Natural killer cell (primary cell): ENCODE measurements at regions of chrX and their contacts with region 1.

Region 1: GRCh38 chrX:57918750-57919436 is 8.6 kb upstream of the ZXDA start:
- DNase-seq: peak in 1 of 2 donors; percentile 61
- ATAC-seq: peak in 1 of 3 donors; percentile 37
- H3K4me3 ChIP-seq: no peak overlapping the region
- H3K4me3 Mint-ChIP-seq: no peak overlapping the region
- H3K27ac ChIP-seq: no peak overlapping the region
- H3K27ac Mint-ChIP-seq: no peak overlapping the region
- H3K4me1 ChIP-seq: no peaks in the 10 kb centered on the region
- H3K4me1 Mint-ChIP-seq: no peaks in the 10 kb centered on the region
- H3K27me3 ChIP-seq: no peaks in the 10 kb centered on the region
- H3K27me3 Mint-ChIP-seq: peaks cover 3 to 19% of the 10 kb centered on the region in 2 donors
- CTCF ChIP-seq: peak; percentile 19

Region 2: GRCh38 chrX:56947695-56948094 is 971.2 kb before region 1 on chrX:
- intact Hi-C with region 1: no loop called
- DNase-seq: no peak
- ATAC-seq: no peak
- H3K4me3 ChIP-seq: no peak overlapping the region
- H3K4me3 Mint-ChIP-seq: no peak overlapping the region
- H3K27ac ChIP-seq: no peak overlapping the region
- H3K27ac Mint-ChIP-seq: no peak overlapping the region
- H3K4me1 ChIP-seq: no peaks in the 10 kb centered on the region
- H3K4me1 Mint-ChIP-seq: no peaks in the 10 kb centered on the region
- H3K27me3 ChIP-seq: no peaks in the 10 kb centered on the region
- H3K27me3 Mint-ChIP-seq: peaks cover 0 to 20% of the 10 kb centered on the region in 2 donors
- CTCF ChIP-seq: no peak

Region 3: GRCh38 chrX:57583477-57583876 is 335.4 kb before region 1 on chrX:
- intact Hi-C with region 1: loop called (anchors 5 kb)
- DNase-seq: no peak
- ATAC-seq: no peak
- H3K4me3 ChIP-seq: no peak overlapping the region
- H3K4me3 Mint-ChIP-seq: no peak overlapping the region
- H3K27ac ChIP-seq: no peak overlapping the region
- H3K27ac Mint-ChIP-seq: no peak overlapping the region
- H3K4me1 ChIP-seq: no peaks in the 10 kb centered on the region
- H3K4me1 Mint-ChIP-seq: no peaks in the 10 kb centered on the region
- H3K27me3 ChIP-seq: no peaks in the 10 kb centered on the region
- H3K27me3 Mint-ChIP-seq: peaks cover 0 to 16% of the 10 kb centered on the region in 2 donors
- CTCF ChIP-seq: no peak

Region 4: GRCh38 chrX:57821703-57822375 is 97.1 kb before region 1 on chrX:
- intact Hi-C with region 1: loop called (anchors 1 kb)
- DNase-seq: peak in 1 of 2 donors; percentile 77
- ATAC-seq: peak in 1 of 3 donors; percentile 67
- H3K4me3 ChIP-seq: no peak overlapping the region
- H3K4me3 Mint-ChIP-seq: no peak overlapping the region
- H3K27ac ChIP-seq: no peak overlapping the region
- H3K27ac Mint-ChIP-seq: no peak overlapping the region
- H3K4me1 ChIP-seq: no peaks in the 10 kb centered on the region
- H3K4me1 Mint-ChIP-seq: peaks cover 0 to 5% of the 10 kb centered on the region in 2 donors
- H3K27me3 ChIP-seq: no peaks in the 10 kb centered on the region
- H3K27me3 Mint-ChIP-seq: peaks cover 0 to 19% of the 10 kb centered on the region in 2 donors
- CTCF ChIP-seq: peak; percentile 45